Activated CD4-positive, alpha-beta T cell treated with anti-CD3 and anti-CD28 coated beads for 36 hours (primary cell): ENCODE measurements at regions of chr1 and their contacts with region 1.

Region 1: GRCh38 chr1:160837558-160838205 is 25.0 kb downstream of the CD244 start:
- DNase-seq: peak; percentile 87
- ATAC-seq: peak; percentile 93
- H3K4me3 Mint-ChIP-seq: peak overlapping the region; percentile 42
- H3K27ac Mint-ChIP-seq: peak overlapping the region; percentile 91
- H3K4me1 Mint-ChIP-seq: peaks cover 55% of the 10 kb centered on the region
- H3K27me3 Mint-ChIP-seq: no peaks in the 10 kb centered on the region

Region 2: DNA sequence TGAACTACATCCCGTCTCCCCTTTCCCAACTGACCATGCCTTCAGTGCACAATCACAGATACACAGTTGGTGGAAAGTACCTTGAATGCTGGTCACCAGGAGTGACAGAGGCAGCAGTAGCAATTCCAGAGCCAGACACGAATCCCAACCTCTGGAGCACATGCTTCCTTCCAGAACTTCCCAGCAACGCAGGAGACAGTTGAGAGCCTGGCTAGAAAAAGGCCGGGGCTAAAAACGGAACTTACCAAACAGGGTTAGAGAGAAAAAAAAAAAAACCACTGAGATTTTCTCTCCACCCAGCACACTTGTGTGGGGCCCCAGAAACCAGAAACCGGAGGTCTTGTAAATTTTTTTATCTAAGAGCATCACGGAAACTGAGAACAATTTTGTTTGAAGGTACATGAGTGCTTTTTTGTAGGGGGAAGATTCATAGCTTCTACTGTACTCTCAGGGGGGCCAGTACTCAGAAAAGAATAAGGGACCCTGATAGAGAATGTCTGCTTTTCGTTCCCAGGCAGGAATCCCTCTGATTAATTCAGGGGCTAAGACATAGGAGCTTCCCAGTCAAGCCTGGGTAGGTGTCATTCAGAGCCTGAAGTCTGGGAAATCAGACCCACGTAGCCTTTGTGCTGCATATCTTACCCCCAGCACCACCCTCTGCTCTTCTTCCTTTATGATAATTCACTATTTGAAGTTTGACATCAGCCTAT is 125.9 kb before region 1 on chr1 and contains the start of gene CD48:
- CTCF ChIA-PET with region 1: interaction called, 13 read pairs
- POLR2A ChIA-PET with region 1: no interaction called
- intact Hi-C with region 1: no loop called
- DNase-seq: peak; percentile 70
- ATAC-seq: peak; percentile 40
- H3K4me3 Mint-ChIP-seq: no peak within 1 kb of the TSS
- H3K27ac Mint-ChIP-seq: no peak within 1 kb of the TSS
- H3K4me1 Mint-ChIP-seq: peaks cover 34% of the 10 kb centered on the region
- H3K27me3 Mint-ChIP-seq: no peaks in the 10 kb centered on the region
- total RNA-seq, gene CD48: 180 to 217 TPM

Region 3: GRCh38 chr1:160795951-160796383 is 41.7 kb before region 1 on chr1 and contains the start of gene LY9:
- CTCF ChIA-PET with region 1: interaction called, 45 read pairs
- POLR2A ChIA-PET with region 1: no interaction called
- intact Hi-C with region 1: loop called in 1 of 2 experiments (anchors 2 kb)
- DNase-seq: peak; percentile 89
- ATAC-seq: peak; percentile 79
- H3K4me3 Mint-ChIP-seq: peak within 1 kb of the TSS; percentile 78
- H3K27ac Mint-ChIP-seq: peak within 1 kb of the TSS; percentile 95
- H3K4me1 Mint-ChIP-seq: peaks cover 61% of the 10 kb centered on the region
- H3K27me3 Mint-ChIP-seq: no peaks in the 10 kb centered on the region
- total RNA-seq, gene LY9: 10.0 to 11.0 TPM

Region 4: GRCh38 chr1:160877221-160877620 is 39.5 kb after region 1 on chr1:
- CTCF ChIA-PET with region 1: interaction called, 9 read pairs
- POLR2A ChIA-PET with region 1: no interaction called
- intact Hi-C with region 1: loop called (anchors 1 to 2 kb)
- DNase-seq: no peak
- ATAC-seq: peak; percentile 70
- H3K4me3 Mint-ChIP-seq: no peak overlapping the region
- H3K27ac Mint-ChIP-seq: no peak overlapping the region
- H3K4me1 Mint-ChIP-seq: peaks cover 24% of the 10 kb centered on the region
- H3K27me3 Mint-ChIP-seq: no peaks in the 10 kb centered on the region

Region 5: DNA sequence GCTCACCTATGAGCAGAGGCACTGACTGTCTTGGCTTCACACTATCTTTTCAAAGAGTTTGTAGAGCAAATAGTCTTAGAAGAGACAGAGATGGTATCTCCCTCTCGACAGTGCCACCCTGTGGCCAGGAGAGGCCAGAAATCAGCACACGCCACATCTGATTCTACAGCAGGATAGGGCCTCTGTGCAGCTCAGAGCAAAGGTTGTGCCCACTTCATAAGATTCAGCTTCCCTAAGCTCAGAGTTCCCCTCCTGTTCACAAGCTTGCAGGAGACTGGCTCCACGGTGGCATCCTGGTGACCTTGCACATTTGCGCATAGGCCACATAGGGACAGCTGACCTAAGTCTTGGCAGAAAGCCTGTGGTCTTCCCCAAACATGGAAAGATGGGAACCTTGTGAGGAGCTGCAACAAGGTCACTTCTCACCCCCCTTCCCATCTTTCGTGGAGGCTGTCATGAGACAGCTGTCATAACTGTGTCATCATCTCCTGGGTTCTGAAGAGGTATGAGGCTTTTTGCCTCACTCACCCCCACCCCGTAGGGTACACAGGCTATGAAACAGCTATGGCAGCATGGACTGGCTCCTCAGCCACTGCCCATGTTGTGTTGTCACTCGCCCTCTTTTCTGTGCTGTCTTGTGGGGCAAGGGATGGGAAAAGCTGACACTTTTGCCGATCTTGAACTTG is 113.9 kb after region 1 on chr1:
- CTCF ChIA-PET with region 1: interaction called, 241 read pairs
- POLR2A ChIA-PET with region 1: interaction called, 3 read pairs
- intact Hi-C with region 1: loop called (anchors 1 kb)
- DNase-seq: peak; percentile 85
- ATAC-seq: peak; percentile 89
- H3K4me3 Mint-ChIP-seq: no peak overlapping the region
- H3K27ac Mint-ChIP-seq: no peak overlapping the region
- H3K4me1 Mint-ChIP-seq: peaks cover 3% of the 10 kb centered on the region
- H3K27me3 Mint-ChIP-seq: no peaks in the 10 kb centered on the region